Dorsolateral prefrontal cortex (tissue), 120 donors: ENCODE measurements at regions of chr15 and their contacts with region 1.

Region 1: DNA sequence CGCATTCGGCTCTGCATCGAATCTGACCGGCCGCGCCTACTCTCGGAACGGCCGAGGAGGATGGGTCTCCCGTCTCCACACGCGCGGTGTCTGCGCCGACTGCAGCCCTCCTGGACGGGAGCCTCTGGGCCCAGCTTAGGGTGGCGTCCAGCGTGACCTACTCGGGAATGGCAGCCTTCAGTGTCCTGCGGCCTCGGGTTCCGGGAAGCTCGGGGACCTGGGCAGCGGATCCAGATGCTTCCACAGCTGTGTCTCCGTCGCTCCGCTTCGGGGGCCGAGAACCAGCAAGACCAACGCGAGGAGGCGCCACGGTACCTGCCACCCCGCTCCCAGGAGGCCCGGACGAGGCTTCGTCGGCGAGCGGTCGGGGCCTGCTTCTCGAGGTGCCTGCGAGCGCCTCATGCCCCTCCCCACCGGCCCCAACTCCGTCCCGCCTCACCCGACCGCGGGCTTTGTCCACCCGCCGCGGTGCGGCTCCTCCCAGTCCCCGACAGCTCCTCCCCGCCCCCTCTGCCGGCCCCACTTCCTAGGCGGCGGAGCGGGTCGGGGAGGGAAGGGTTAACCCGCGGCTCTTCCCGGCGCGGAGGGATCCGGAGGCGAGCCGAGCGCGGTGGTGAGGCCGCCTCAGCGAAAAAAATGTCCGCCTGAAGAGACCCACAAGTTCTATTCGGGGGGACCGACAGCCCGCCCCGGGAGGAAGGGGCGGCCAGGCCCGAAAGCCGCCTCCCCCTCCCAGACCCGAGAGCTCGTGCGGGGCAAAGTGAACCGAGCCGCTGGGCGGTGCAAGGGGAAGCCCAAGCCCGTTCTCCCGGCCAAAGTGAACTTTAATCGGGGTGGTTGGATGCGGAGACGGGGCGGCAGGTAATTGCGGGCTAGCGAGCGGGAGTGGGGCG is at the start of gene TCF12:
- DNase-seq: peak; percentile 76 to 94 (median 87)
- H3K4me3 ChIP-seq: peak within 1 kb of the TSS; percentile 71 to 98 (median 87)
- H3K27ac ChIP-seq: peak within 1 kb of the TSS; percentile 83 to 99 (median 97)
- H3K27me3 ChIP-seq: no peaks in the 10 kb centered on the region
- CTCF ChIP-seq: peak in 53 of 56 donors; percentile 29 to 77 (median 56)
- total RNA-seq, gene TCF12: 63.4 to 217 (median 109) TPM

Region 2: DNA sequence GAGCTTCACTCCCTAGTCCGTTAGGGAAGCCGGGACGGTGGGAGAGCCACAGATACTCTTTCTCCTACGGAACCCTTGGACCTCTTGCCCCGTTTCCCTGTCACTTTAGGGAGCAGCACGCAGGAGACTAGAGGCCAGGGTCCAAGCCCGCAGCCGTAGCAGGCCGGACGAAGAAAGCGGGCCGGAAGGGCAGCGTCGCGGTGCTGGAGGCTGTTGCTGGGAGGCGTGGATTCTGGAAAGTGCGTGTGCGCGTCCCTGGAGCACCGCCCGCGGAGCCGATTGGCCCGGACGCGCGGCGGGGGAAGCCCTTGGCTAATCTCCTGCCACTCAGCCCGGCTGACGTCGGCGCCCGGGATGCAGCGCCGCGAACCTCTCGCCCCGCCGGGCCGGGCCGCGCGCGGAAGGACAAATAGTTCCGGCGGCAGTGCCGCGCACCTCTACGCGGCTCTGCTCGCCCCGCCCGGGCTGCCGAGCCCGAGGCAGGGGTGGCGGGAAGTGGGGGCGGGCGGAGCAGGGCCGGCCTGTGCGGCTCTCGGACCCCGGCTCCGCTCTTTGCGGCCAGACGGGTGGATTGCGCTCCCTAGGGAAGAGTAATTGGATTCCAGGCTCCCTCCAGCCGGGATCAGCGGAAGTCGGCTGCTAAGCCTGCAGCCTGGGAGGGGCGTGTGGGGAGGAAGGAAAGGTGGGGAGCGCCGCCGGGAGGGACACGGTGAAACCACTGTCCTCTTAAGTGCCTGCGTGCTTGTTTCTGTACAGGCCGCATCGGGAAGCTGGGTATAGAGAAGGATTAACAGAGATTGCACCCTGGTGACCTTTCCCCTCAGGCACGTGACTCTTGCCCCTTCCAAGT is 31.1 kb before region 1 on chr15:
- intact Hi-C with region 1: loop called (anchors 1 kb)
- DNase-seq: peak; percentile 83 to 96 (median 92)
- H3K4me3 ChIP-seq: peak overlapping the region; percentile 57 to 94 (median 81)
- H3K27ac ChIP-seq: peak overlapping the region; percentile 86 to 100 (median 99)
- H3K27me3 ChIP-seq: no peaks in the 10 kb centered on the region
- CTCF ChIP-seq: peak in 35 of 56 donors; percentile 5 to 61 (median 34)

Region 3: GRCh38 chr15:57079931-57080620 is 161.8 kb after region 1 on chr15:
- intact Hi-C with region 1: loop called in 1 of 2 experiments (anchors 10 kb)
- DNase-seq: no peak
- H3K4me3 ChIP-seq: peak overlapping the region in 36 of 59 donors; percentile 0 to 47 (median 22)
- H3K27ac ChIP-seq: peak overlapping the region in 58 of 59 donors; percentile 1 to 86 (median 76)
- H3K27me3 ChIP-seq: no peaks in the 10 kb centered on the region
- CTCF ChIP-seq: peak in 34 of 56 donors; percentile 11 to 55 (median 30)

Region 4: DNA sequence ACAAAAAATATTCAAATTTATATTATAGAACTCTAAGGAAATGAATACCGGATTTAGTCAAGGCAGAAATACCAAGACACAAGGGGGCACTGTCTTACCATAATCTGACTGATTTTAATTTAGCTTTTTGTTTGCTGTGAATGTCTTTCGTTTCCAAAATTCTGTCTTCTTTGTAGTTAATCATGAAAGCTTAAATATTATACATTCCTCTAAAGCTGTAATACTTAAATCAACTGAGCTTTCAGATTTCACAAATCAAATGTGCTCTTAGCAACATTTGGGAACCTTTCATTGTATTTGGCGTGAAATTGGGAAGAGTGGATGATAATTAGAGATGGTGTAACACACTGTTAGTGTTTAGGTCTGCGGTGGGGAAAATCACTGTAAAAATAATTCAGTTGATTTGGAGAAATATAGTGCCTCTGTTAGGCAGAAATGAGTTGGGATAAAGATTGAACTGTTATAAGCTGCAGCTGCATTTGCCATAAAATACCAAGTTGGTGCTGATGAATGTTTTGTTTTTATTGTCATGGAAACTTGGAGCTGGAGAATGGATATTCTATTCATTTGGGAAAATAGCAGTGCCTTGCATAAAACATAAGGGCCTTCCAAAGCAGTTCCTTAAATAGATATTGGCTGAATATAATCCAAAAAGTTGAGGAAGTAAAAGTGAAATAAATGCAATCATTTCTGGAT is 228.4 kb after region 1 on chr15:
- intact Hi-C with region 1: loop called in 1 of 2 experiments (anchors 10 kb)
- DNase-seq: no peak
- H3K4me3 ChIP-seq: peak overlapping the region in 56 of 59 donors; percentile 1 to 57 (median 36)
- H3K27ac ChIP-seq: peak overlapping the region in 51 of 59 donors; percentile 4 to 88 (median 54)
- H3K27me3 ChIP-seq: no peaks in the 10 kb centered on the region
- CTCF ChIP-seq: peak; percentile 70 to 96 (median 85)